AG04449 (cell line): ENCODE measurements at regions of chr14 and their contacts with region 1.

Region 1: GRCh38 chr14:99995700-99996356 is 69.4 kb upstream of the EVL start:
- DNase-seq: no peak
- H3K4me3 ChIP-seq: no peak overlapping the region
- CTCF ChIP-seq: peak; percentile 62

Region 2: DNA sequence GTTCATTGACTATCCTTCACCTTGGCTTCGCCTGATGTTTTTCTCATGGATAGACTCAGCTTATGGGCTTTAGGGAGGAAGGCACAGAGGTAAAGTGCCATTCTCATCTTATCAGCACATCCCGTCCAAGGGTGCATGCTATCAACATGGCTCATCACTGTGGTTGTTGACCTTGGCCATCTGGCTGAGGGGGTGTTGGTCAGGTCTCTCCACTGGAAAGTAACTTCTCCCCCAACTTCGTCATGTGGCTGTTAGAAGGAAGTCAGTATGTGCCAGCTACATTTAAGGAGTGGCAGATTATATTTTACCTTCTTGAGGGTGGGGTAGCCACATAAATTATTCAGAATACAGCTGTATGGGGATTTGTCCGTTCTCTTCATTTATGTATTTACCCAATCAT is 133.7 kb before region 1 on chr14:
- CTCF ChIA-PET with region 1: no interaction called
- POLR2A ChIA-PET with region 1: no interaction called
- DNase-seq: no peak
- H3K4me3 ChIP-seq: no peak overlapping the region
- CTCF ChIP-seq: no peak

Region 3: GRCh38 chr14:99910337-99911309 is 85.2 kb before region 1 on chr14:
- CTCF ChIA-PET with region 1: no interaction called
- POLR2A ChIA-PET with region 1: no interaction called
- DNase-seq: peak; percentile 87
- H3K4me3 ChIP-seq: no peak overlapping the region
- CTCF ChIP-seq: no peak

Region 4: DNA sequence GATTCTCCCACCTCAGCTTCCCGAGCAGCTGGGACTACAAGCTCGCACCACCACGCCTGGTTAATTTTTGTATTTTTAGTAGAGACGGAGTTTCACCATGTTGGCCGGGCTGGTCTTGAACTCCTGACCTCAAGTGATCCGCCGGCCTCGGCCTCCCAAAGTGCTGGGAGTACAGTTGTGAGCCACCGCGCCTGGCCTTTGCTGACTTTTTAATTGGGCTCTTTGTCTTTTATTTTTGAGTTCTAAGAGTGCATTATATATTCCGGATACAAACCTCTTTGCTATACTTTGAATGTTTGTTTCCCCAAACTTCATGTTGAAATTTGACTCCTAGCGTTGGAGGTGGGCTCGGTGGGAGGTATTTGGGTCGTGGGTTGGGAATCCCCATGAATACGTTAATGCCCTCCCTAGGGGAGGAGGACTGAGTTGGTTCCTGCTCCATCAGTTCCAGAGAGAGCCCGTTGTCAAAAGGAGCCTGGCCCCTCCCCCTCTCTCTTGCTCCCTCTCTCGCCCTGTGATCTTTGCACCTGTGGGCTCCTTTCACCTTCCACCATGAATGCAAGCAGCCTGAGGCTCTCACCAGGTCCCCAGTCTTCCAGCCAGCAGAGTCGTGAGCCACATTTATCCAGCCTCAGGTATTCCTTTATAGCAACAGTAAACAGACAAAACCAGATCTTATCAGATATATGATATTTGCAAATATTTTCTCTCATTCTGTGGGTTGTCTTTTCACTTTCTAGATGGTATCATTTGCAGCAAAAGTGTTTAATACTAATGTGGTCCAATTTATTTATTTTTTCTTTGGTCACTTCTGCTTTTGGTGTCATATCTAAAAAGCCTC is 33.8 kb before region 1 on chr14:
- CTCF ChIA-PET with region 1: no interaction called
- POLR2A ChIA-PET with region 1: no interaction called
- DNase-seq: no peak
- H3K4me3 ChIP-seq: no peak overlapping the region
- CTCF ChIP-seq: no peak

Region 5: GRCh38 chr14:100019156-100019744 is 23.4 kb after region 1 on chr14:
- CTCF ChIA-PET with region 1: interaction called, 11 read pairs
- POLR2A ChIA-PET with region 1: interaction called, 3 read pairs
- DNase-seq: no peak
- H3K4me3 ChIP-seq: no peak overlapping the region
- CTCF ChIP-seq: no peak

Region 6: GRCh38 chr14:100067971-100068959 is 72.4 kb after region 1 on chr14:
- CTCF ChIA-PET with region 1: no interaction called
- POLR2A ChIA-PET with region 1: no interaction called
- DNase-seq: no peak
- H3K4me3 ChIP-seq: no peak overlapping the region
- CTCF ChIP-seq: no peak